ENCODE measurements at regions of chr17 and their contacts with region 1.

Region 1: GRCh38 chr17:31508288-31509094 is 117.0 kb downstream of the RAB11FIP4 start:
- DNase-seq: peak; percentile 92
- ATAC-seq: peak; percentile 90
- H3K4me3 Mint-ChIP-seq: peak overlapping the region; percentile 76
- H3K27ac Mint-ChIP-seq: peak overlapping the region; percentile 98
- H3K4me1 Mint-ChIP-seq: peaks cover 47% of the 10 kb centered on the region
- H3K27me3 Mint-ChIP-seq: no peaks in the 10 kb centered on the region

Region 2: DNA sequence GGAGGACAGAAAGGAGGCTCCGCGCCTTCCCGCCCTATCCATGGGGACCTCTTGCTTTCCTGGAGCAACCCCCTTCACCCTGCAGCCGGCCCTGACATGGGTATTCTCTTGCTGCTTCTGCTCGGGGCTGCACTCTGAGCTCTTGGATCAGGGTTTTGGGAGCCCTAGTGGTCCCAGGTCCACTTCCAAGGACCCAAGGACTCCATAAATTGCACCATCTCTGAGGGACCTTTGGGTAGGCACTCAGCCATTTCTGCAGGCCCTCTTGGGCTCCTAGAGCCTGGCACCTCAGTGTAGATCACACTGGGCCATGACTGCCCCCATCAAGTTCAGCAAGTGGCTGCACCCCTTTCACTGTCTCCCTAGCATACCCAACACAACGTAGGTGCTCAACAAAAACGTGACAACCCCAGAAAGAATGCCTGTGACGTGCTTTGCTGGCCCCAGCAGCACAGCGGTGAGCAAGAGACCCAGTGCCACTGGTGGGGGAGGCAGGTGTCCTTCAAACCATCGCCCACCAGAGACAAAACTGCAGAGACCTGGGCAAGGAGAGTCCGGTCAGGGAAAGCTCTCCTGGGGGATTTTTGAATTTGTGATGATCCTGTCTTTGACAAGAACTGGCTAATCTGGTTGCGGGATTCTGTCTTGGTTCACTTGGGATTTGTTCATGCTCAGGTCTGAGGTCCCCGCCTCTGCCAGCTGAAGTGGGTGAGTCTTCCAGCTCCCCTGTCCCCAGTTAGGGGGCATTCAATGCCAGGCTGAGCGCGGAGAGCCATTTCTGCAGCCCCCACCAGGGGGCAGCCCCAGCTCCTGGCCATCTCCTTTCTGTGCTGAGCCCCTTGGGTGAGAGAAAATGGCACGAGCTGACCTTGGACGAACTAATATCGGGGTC is 119.5 kb before region 1 on chr17:
- CTCF ChIA-PET with region 1: interaction called, 15 read pairs
- DNase-seq: peak; percentile 51
- ATAC-seq: peak; percentile 54
- H3K4me3 Mint-ChIP-seq: no peak overlapping the region
- H3K27ac Mint-ChIP-seq: no peak overlapping the region
- H3K4me1 Mint-ChIP-seq: peaks cover 7% of the 10 kb centered on the region
- H3K27me3 Mint-ChIP-seq: peaks cover 43% of the 10 kb centered on the region

Region 3: DNA sequence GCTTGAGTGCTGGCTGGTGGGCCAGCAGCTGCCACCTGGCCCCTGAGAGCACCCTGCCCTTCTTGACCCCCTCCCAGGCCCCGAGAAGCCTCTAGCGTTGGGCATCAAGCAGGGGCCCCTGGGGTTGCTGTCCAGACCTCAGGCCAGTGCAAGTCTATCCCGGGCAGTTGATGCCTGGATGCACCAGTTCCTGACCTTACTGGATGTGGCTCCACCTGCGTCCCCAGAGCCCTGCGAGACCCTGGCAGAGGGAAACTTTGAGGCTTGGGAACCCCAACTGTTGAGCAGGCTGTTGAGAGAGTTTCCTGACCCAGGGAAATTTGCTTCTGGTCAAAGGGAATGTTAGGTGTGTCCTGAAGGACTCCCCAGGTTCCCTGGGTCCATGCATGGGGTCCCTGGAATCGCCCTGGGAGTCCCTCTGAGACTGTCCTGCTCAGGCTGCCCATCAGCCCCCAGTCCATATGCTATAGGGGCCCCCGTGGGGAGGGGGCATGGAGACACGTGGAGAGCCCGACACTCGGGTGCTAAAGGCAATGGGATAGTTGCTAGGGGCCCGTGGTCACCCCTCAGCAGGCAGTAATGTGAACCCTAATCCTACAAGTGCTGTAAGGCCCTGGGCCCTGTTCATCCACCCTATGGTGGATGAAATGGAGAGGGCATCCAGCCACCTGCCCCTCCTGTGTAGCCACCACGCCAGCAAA is 70.6 kb before region 1 on chr17:
- CTCF ChIA-PET with region 1: interaction called, 15 read pairs
- DNase-seq: no peak
- ATAC-seq: no peak
- H3K4me3 Mint-ChIP-seq: no peak overlapping the region
- H3K27ac Mint-ChIP-seq: no peak overlapping the region
- H3K4me1 Mint-ChIP-seq: peaks cover 16% of the 10 kb centered on the region
- H3K27me3 Mint-ChIP-seq: peaks cover 9% of the 10 kb centered on the region

Region 4: GRCh38 chr17:31487648-31488263 is 20.7 kb before region 1 on chr17:
- CTCF ChIA-PET with region 1: interaction called, 50 read pairs
- DNase-seq: peak; percentile 93
- ATAC-seq: peak; percentile 91
- H3K4me3 Mint-ChIP-seq: peak overlapping the region; percentile 84
- H3K27ac Mint-ChIP-seq: peak overlapping the region; percentile 73
- H3K4me1 Mint-ChIP-seq: peaks cover 48% of the 10 kb centered on the region
- H3K27me3 Mint-ChIP-seq: no peaks in the 10 kb centered on the region

Region 5: GRCh38 chr17:31494259-31495021 is 14.1 kb before region 1 on chr17:
- CTCF ChIA-PET with region 1: interaction called, 50 read pairs
- DNase-seq: peak; percentile 88
- ATAC-seq: peak; percentile 88
- H3K4me3 Mint-ChIP-seq: peak overlapping the region; percentile 56
- H3K27ac Mint-ChIP-seq: peak overlapping the region; percentile 95
- H3K4me1 Mint-ChIP-seq: peaks cover 87% of the 10 kb centered on the region
- H3K27me3 Mint-ChIP-seq: no peaks in the 10 kb centered on the region

Region 6: DNA sequence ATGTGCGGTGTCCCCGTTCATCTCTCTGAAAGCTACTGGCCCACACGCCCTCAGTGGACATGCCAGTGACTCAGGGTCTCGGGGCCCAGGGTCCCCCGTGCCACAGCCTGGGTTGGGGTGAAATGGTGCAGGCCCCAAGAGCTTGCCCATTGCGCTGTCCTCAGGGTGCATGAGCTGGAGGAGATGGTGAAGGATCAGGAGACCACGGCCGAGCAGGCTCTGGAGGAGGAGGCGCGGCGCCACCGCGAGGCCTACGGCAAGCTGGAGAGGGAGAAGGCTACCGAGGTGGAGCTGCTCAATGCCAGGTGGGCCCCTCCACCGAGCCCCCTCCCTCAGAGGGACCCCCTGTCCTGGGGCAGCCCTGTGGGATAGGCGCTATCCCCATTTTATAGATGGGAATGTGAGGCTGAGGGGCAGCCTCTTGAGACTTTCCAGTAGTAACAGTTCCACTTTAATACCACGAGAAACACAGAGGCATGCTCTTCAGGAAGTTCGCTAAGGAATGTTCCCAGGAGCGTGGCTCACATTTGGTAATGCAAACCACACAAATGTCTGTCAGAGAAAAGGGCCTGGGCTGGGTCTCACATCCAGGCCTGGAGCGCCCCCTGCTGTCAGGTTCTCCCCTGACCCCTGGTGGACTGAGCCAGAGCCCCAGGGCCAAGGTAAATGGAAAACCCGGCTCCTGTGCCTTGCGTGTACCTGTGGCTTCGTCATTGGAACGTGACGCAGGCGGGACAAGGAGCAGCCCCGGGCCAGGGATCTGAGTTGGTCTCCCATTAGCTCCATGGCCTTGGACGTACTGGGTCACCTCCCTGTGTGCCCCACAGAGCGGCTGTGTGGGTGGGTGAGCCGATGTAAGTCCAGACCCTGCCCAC is 16.7 kb after region 1 on chr17:
- CTCF ChIA-PET with region 1: interaction called, 13 read pairs
- DNase-seq: peak; percentile 87
- ATAC-seq: peak; percentile 85
- H3K4me3 Mint-ChIP-seq: no peak overlapping the region
- H3K27ac Mint-ChIP-seq: no peak overlapping the region
- H3K4me1 Mint-ChIP-seq: peaks cover 1% of the 10 kb centered on the region
- H3K27me3 Mint-ChIP-seq: no peaks in the 10 kb centered on the region

Measured in activated CD8-positive, alpha-beta memory T cell treated with anti-CD3 and anti-CD28 coated beads, Interleukin-2, amount 10 ng/mL, durations not matched to agents 7 days and 5 days (primary cell).